Activated B cell treated with CpG ODN at 0.5 μM for 24 hours (primary cell): ENCODE measurements at regions of chr17 and their contacts with region 1.

Region 1: GRCh38 chr17:31373150-31374093 is 18.1 kb upstream of the RAB11FIP4 start:
- DNase-seq: no peak
- ATAC-seq: peak; percentile 84
- H3K4me3 Mint-ChIP-seq: no peak overlapping the region
- H3K27ac Mint-ChIP-seq: no peak overlapping the region
- H3K4me1 Mint-ChIP-seq: peaks cover 35% of the 10 kb centered on the region
- H3K27me3 Mint-ChIP-seq: no peaks in the 10 kb centered on the region
- CTCF ChIP-seq: no peak

Region 2: DNA sequence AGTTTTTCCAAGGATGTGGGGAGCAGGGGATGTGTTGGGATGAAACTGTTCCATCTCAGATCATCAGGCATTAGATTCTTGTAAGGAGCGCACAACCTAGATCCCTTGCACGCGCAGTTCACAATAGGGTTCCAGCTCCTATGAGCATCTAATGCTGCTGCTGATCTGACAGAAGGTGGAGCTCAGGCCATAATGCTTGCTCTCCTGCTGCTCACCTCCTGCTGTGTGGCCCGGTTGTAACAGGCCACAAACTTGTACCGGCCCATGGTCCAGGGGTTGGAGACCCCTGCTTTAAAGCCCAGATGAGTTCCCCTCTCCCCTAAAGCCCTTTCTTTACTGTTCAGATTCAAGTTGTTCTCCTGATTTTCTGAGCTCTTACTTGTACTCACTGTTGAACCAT is 357.8 kb before region 1 on chr17:
- CTCF ChIA-PET with region 1: interaction called, 14 read pairs
- POLR2A ChIA-PET with region 1: no interaction called
- intact Hi-C with region 1: loop called (anchors 2 kb)
- DNase-seq: no peak
- ATAC-seq: no peak
- H3K4me3 Mint-ChIP-seq: no peak overlapping the region
- H3K27ac Mint-ChIP-seq: no peak overlapping the region
- H3K4me1 Mint-ChIP-seq: no peaks in the 10 kb centered on the region
- H3K27me3 Mint-ChIP-seq: no peaks in the 10 kb centered on the region
- CTCF ChIP-seq: no peak

Region 3: GRCh38 chr17:31216053-31216751 is 157.2 kb before region 1 on chr17:
- CTCF ChIA-PET with region 1: interaction called, 18 read pairs
- POLR2A ChIA-PET with region 1: no interaction called
- intact Hi-C with region 1: loop called (anchors 2 kb)
- DNase-seq: no peak
- ATAC-seq: no peak
- H3K4me3 Mint-ChIP-seq: no peak overlapping the region
- H3K27ac Mint-ChIP-seq: no peak overlapping the region
- H3K4me1 Mint-ChIP-seq: no peaks in the 10 kb centered on the region
- H3K27me3 Mint-ChIP-seq: no peaks in the 10 kb centered on the region
- CTCF ChIP-seq: peak; percentile 72

Region 4: DNA sequence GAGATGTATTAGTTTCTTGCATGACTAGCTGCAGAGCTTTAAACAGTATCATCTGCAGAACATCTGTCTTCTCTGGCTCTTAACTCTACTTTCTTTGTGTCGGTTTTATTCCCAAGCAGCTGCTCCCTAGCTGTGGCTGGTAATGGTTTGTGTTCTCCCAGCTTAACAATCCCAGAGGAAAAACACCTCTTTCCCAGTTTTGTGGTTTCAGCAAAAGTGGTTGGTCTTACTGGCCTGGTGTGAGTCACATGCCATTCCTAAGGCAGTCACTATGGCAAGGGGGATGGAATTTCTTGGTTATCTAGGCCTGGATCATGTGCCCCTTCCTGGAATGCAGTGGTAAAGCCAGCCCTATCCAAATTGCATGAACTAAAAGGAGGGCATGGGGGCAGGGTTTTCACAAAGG is 103.8 kb before region 1 on chr17:
- CTCF ChIA-PET with region 1: interaction called, 11 read pairs
- POLR2A ChIA-PET with region 1: no interaction called
- intact Hi-C with region 1: loop called (anchors 1 kb)
- DNase-seq: no peak
- ATAC-seq: no peak
- H3K4me3 Mint-ChIP-seq: no peak overlapping the region
- H3K27ac Mint-ChIP-seq: no peak overlapping the region
- H3K4me1 Mint-ChIP-seq: no peaks in the 10 kb centered on the region
- H3K27me3 Mint-ChIP-seq: no peaks in the 10 kb centered on the region
- CTCF ChIP-seq: no peak

Region 5: GRCh38 chr17:31313982-31314784 is 59.2 kb before region 1 on chr17 and contains the start of gene EVI2B:
- CTCF ChIA-PET with region 1: interaction called, 12 read pairs
- POLR2A ChIA-PET with region 1: interaction called, 13 read pairs
- intact Hi-C with region 1: loop called (anchors 2 kb)
- DNase-seq: no peak
- ATAC-seq: peak; percentile 25
- H3K4me3 Mint-ChIP-seq: peak within 1 kb of the TSS; percentile 93
- H3K27ac Mint-ChIP-seq: peak within 1 kb of the TSS; percentile 94
- H3K4me1 Mint-ChIP-seq: peaks cover 63% of the 10 kb centered on the region
- H3K27me3 Mint-ChIP-seq: no peaks in the 10 kb centered on the region
- CTCF ChIP-seq: no peak
- total RNA-seq, gene EVI2B: 104 and 111 TPM in 2 replicates

Region 6: GRCh38 chr17:31321481-31321880 is 51.9 kb before region 1 on chr17 and contains the start of gene EVI2A:
- CTCF ChIA-PET with region 1: interaction called, 10 read pairs
- POLR2A ChIA-PET with region 1: interaction called, 13 read pairs
- intact Hi-C with region 1: loop called (anchors 1 kb)
- DNase-seq: no peak
- ATAC-seq: peak; percentile 69
- H3K4me3 Mint-ChIP-seq: peak within 1 kb of the TSS; percentile 84
- H3K27ac Mint-ChIP-seq: peak within 1 kb of the TSS; percentile 96
- H3K4me1 Mint-ChIP-seq: peaks cover 41% of the 10 kb centered on the region
- H3K27me3 Mint-ChIP-seq: no peaks in the 10 kb centered on the region
- CTCF ChIP-seq: no peak
- total RNA-seq, gene EVI2A: 46.6 and 52.5 TPM in 2 replicates

Region 7: DNA sequence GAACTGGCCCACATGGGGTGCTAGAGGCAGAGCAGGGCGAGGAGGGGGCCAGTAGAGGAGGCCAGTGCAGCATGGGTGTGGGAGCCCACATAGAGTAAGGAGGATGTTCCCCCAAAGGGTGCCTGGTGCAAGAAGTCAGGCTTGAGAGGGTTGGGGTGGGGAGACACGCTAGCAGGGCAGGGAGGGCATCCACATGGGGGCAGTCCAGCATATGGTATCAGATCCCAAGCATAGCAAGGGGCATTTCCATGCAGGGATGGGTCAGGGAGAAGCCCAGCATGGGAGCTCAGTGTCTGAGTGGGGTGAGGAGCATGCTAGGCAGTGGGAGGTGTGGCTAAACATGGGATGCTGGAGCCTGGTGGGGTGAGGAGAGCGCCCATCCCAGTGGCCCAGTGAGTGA is 271.9 kb after region 1 on chr17:
- CTCF ChIA-PET with region 1: no interaction called
- POLR2A ChIA-PET with region 1: no interaction called
- intact Hi-C with region 1: no loop called
- DNase-seq: no peak
- ATAC-seq: no peak
- H3K4me3 Mint-ChIP-seq: no peak overlapping the region
- H3K27ac Mint-ChIP-seq: no peak overlapping the region
- H3K4me1 Mint-ChIP-seq: no peaks in the 10 kb centered on the region
- H3K27me3 Mint-ChIP-seq: peaks cover 11% of the 10 kb centered on the region
- CTCF ChIP-seq: no peak